ENCODE measurements at regions of chr7 and their contacts with region 1.

Region 1: DNA sequence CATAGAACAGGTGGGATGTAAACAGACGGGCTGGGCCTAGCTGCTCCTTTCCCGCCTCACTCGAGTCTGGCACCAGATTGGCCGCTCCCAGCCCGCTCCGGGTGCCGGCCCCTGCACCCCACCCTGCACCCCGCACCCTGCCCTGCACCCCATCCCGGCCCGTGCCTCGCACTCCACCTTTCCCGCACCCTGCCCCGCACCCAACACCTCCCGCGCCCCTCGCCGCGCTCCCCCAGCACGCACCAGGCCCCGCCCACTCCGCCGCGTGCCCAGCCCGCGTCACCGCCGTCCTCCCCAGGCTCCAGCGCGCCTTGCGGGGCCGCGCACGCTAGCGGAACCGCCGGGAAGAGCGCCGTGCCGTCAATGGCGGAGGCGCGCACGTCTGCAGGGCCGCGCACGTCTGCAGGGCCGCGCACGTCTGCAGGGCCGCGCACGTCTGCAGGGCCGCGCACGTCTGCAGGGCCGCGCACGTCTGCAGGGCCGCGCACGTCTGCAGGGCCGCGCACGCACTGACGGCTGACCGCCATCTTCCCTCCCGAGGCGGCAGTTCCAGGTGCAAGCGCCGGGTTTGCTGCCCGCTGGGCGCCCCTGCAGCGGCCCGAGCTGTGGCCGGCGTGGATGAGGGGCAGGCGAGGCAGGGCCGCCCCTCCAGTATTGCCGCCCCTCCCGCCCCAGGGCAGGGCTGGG is at the start of gene UBE3C:
- DNase-seq: peak; percentile 96 to 98 (median 98)
- ATAC-seq: peak; percentile 91
- H3K4me3 ChIP-seq: peak within 1 kb of the TSS; percentile 88
- H3K27ac ChIP-seq: peak within 1 kb of the TSS; percentile 88
- H3K4me1 ChIP-seq: peaks cover 25 to 28% of the 10 kb centered on the region in 2 experiments
- H3K27me3 ChIP-seq: no peaks in the 10 kb centered on the region
- CTCF ChIP-seq: peak in 1 of 3 experiments; percentile 17; a peak in 1 of 6 replicates
- EP300 ChIP-seq: no peak; the same call in 1 of the 2 replicates
- POLR2A ChIP-seq: peak; percentile 84
- RAD21 ChIP-seq: no peak
- polyA plus RNA-seq, gene UBE3C: 9.6 to 15.3 TPM

Region 2: DNA sequence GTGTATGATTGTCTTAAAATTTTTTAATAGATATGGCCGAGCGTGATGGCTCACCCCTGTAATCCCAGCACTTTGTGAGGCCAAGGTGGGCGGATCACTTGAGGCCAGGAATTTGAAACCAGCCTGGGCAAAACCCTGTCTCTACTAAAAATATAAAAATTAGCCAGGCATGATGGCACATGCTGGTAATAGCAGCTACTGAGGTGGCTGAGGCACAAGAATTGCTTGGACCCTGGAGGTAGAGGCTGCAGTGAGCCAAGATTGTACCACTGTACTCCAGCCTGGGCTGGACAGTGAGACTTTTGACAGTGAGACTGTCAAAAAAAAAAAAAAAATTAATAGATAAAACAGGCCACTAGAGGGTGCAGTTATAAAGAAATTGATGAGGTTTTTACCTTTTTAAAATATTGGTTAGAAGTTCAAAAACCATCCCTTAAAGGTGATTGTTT is 168.6 kb before region 1 on chr7:
- CTCF ChIA-PET with region 1: no interaction called
- POLR2A ChIA-PET with region 1: no interaction called
- in situ Hi-C with region 1: no loop called
- intact Hi-C with region 1: loop called (anchors 5 kb)
- DNase-seq: peak in 1 of 4 experiments; percentile 27
- ATAC-seq: peak; percentile 72
- H3K4me3 ChIP-seq: no peak overlapping the region
- H3K27ac ChIP-seq: no peak overlapping the region
- H3K4me1 ChIP-seq: no peaks in the 10 kb centered on the region
- H3K27me3 ChIP-seq: no peaks in the 10 kb centered on the region
- CTCF ChIP-seq: peak; percentile 7 to 57 (median 35); a peak in 3 of 6 replicates
- EP300 ChIP-seq: no peak
- POLR2A ChIP-seq: no peak
- RAD21 ChIP-seq: peak; percentile 38 to 63; a peak in 3 of 4 replicates

Region 3: DNA sequence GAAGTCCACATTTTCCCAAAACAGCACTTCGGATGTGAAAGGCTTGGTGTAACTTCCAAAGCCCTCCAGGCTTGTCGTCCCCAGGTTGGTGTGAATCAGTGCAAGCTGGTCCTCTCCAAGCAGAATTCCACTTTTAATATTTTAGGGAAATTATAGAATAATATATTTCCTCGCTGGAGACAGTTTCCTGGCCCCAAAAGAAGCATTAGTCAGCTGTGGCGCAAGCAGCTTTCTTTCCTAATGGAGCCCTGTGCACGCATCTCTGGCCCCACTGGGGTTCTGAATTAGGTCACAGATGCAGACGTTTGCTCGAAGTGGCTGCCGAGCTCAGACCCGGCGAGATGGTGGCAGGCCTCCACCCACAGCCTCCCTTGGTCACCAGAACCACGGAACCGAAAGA is 94.8 kb before region 1 on chr7:
- CTCF ChIA-PET with region 1: no interaction called
- POLR2A ChIA-PET with region 1: no interaction called
- in situ Hi-C with region 1: no loop called
- intact Hi-C with region 1: no loop called
- DNase-seq: peak in 2 of 4 experiments; percentile 17 to 20
- ATAC-seq: no peak
- H3K4me3 ChIP-seq: no peak overlapping the region
- H3K27ac ChIP-seq: no peak overlapping the region
- H3K4me1 ChIP-seq: peaks cover 10 to 26% of the 10 kb centered on the region in 2 experiments; a peak in 4 of 5 replicates
- H3K27me3 ChIP-seq: peaks cover 77 to 90% of the 10 kb centered on the region in 2 experiments
- CTCF ChIP-seq: no peak
- EP300 ChIP-seq: no peak
- POLR2A ChIP-seq: no peak
- RAD21 ChIP-seq: no peak

Region 4: GRCh38 chr7:157150882-157151281 is 12.3 kb after region 1 on chr7:
- CTCF ChIA-PET with region 1: no interaction called
- POLR2A ChIA-PET with region 1: interaction called, 25 read pairs
- in situ Hi-C with region 1: no loop called
- intact Hi-C with region 1: no loop called
- DNase-seq: peak; percentile 45 to 52 (median 48)
- ATAC-seq: peak; percentile 72
- H3K4me3 ChIP-seq: no peak overlapping the region
- H3K27ac ChIP-seq: peak overlapping the region; percentile 9; the same call in 1 of the 3 replicates
- H3K4me1 ChIP-seq: peaks cover 11 to 14% of the 10 kb centered on the region in 2 experiments; a peak in 4 of 5 replicates
- H3K27me3 ChIP-seq: no peaks in the 10 kb centered on the region
- CTCF ChIP-seq: no peak
- EP300 ChIP-seq: no peak
- POLR2A ChIP-seq: no peak
- RAD21 ChIP-seq: no peak

Measured in K562 (cell line).